AG04450 (cell line): ENCODE measurements at regions of chr2 and their contacts with region 1.

Region 1: GRCh38 chr2:236343400-236344161 is 79.4 kb upstream of the ASB18 start:
- DNase-seq: peak; percentile 39
- H3K4me3 ChIP-seq: no peak overlapping the region
- H3K27ac ChIP-seq: no peak overlapping the region
- H3K27me3 ChIP-seq: no peaks in the 10 kb centered on the region
- CTCF ChIP-seq: peak; percentile 92

Region 2: GRCh38 chr2:237072067-237072931 is 728.7 kb after region 1 on chr2:
- CTCF ChIA-PET with region 1: interaction called, 21 read pairs
- POLR2A ChIA-PET with region 1: no interaction called
- DNase-seq: no peak
- H3K4me3 ChIP-seq: no peak overlapping the region
- H3K27ac ChIP-seq: no peak overlapping the region
- H3K27me3 ChIP-seq: no peaks in the 10 kb centered on the region
- CTCF ChIP-seq: peak; percentile 89